SK-N-SH (cell line): ENCODE measurements at regions of chr16 and their contacts with region 1.

Region 1: DNA sequence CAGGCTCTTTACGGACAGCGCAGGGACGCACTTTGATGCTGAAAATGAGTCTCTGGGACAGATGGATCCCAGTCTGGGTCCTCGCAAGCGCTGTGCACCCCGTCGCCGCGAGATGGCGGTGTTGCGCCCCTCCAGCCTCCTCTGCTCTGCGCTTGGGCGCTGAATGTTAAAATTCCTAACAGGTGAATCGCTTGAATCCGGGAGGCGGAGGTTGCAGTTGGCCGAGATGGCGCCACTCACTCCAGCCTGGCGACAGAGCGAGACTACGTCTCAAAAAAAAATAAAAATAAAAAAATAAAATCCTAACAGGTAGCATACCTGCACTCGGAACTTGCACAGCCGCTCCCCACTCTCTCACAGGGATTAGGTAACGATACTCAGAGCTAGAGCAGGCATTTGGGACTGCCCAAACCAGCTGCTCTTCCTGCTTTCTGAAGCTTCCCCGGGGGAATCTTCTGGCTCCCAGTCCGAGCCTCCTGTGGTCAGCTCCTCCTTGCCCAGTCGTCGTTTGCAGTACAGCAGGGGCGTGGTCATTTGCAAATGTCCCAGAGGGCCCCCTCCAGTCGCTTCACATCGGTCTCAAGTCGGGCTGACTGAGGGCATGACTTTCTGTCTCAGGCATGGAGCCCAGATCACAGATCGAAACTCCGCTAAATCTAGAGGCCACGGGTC is 26.2 kb upstream of the OSGIN1 start:
- DNase-seq: peak; percentile 90
- H3K4me3 ChIP-seq: peak overlapping the region in 1 of 2 experiments; percentile 51; a peak in 1 of 4 replicates
- H3K27ac ChIP-seq: no peak overlapping the region
- H3K4me1 ChIP-seq: peaks cover 0 to 11% of the 10 kb centered on the region in 2 experiments; a peak in 1 of 4 replicates
- H3K27me3 ChIP-seq: no peaks in the 10 kb centered on the region
- CTCF ChIP-seq: peak; percentile 95
- EP300 ChIP-seq: no peak
- RAD21 ChIP-seq: peak; percentile 73

Region 2: GRCh38 chr16:83826146-83826913 is 100.5 kb before region 1 on chr16:
- CTCF ChIA-PET with region 1: interaction called, 13 read pairs
- POLR2A ChIA-PET with region 1: no interaction called
- DNase-seq: peak; percentile 86
- H3K4me3 ChIP-seq: peak overlapping the region in 1 of 2 experiments; percentile 2; a peak in 1 of 4 replicates
- H3K27ac ChIP-seq: no peak overlapping the region
- H3K4me1 ChIP-seq: no peaks in the 10 kb centered on the region; a peak in 1 of 4 replicates
- H3K27me3 ChIP-seq: no peaks in the 10 kb centered on the region; the same call in 1 of the 2 replicates
- CTCF ChIP-seq: peak; percentile 92
- EP300 ChIP-seq: no peak
- RAD21 ChIP-seq: peak; percentile 86

Region 3: GRCh38 chr16:83898463-83899271 is 28.2 kb before region 1 on chr16 and contains the start of gene MLYCD:
- CTCF ChIA-PET with region 1: interaction called, 13 read pairs
- POLR2A ChIA-PET with region 1: no interaction called
- DNase-seq: peak; percentile 98
- H3K4me3 ChIP-seq: peak within 1 kb of the TSS; percentile 69 to 81
- H3K27ac ChIP-seq: peak within 1 kb of the TSS; percentile 28 to 61; a peak in 3 of 4 replicates
- H3K4me1 ChIP-seq: peaks cover 0 to 9% of the 10 kb centered on the region in 2 experiments; a peak in 2 of 4 replicates
- H3K27me3 ChIP-seq: no peaks in the 10 kb centered on the region
- CTCF ChIP-seq: no peak
- EP300 ChIP-seq: no peak
- RAD21 ChIP-seq: no peak
- polyA plus RNA-seq, gene MLYCD: 2.4 and 2.7 TPM in 2 replicates

Region 4: DNA sequence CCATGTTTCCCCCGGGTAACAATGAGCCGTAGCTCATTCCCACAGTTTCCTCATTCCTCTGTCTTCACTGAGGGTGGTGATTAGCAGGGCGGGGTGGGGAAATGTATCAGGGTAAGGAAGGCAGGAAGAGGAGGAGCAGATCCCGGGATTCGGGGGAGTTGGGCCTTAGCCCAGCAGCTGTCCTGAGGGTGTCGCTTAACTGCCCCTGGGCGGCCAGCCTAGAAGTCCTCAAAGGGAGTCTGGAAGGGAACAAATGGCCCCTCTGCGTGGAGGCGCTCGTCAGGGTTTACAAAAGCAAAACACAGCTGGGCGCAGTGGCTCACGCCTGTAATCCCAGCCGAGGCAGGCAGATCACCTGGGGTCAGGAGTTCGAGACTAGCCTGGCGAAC is 13.6 kb before region 1 on chr16:
- CTCF ChIA-PET with region 1: interaction called, 16 read pairs
- POLR2A ChIA-PET with region 1: interaction called, 3 read pairs
- DNase-seq: no peak
- H3K4me3 ChIP-seq: no peak overlapping the region
- H3K27ac ChIP-seq: no peak overlapping the region
- H3K4me1 ChIP-seq: no peaks in the 10 kb centered on the region
- H3K27me3 ChIP-seq: no peaks in the 10 kb centered on the region
- CTCF ChIP-seq: no peak
- EP300 ChIP-seq: no peak
- RAD21 ChIP-seq: no peak

Region 5: DNA sequence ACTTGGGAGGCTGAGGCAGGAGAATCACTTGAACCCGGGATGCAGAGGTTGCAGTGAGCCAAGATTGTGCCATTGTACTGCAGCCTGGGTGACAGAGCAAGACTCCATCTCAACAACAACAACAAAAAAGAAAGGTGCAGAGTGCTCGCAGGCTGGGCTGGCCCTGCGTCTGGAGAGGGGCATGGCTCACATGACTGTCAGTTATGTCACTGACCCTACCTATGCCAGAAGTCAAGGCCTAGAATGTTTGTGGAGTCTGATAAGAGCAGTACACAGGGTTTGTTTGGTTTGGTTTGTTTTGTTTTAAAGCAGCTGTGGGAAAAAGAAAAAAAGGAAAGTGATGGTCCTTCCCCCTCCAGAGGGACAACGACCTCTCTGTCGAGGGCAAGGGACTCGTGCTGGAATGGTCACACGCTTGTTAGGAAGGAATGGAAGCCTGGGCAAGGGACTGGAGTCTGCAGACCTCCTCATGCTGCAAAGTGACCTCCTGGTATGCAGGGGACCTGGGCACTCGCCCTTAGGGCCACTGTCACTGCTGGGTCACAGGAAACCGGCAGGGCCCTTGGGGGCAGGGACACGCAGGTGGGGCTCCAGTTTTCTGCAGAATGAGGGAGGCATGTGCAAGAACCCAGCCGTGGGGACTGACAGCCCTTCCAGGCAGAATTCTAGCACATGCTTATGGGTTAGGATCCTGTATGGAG is 16.1 kb after region 1 on chr16:
- CTCF ChIA-PET with region 1: interaction called, 33 read pairs
- POLR2A ChIA-PET with region 1: no interaction called
- DNase-seq: no peak
- H3K4me3 ChIP-seq: no peak overlapping the region
- H3K27ac ChIP-seq: no peak overlapping the region
- H3K4me1 ChIP-seq: no peaks in the 10 kb centered on the region
- H3K27me3 ChIP-seq: no peaks in the 10 kb centered on the region
- CTCF ChIP-seq: no peak
- EP300 ChIP-seq: no peak
- RAD21 ChIP-seq: no peak

Region 6: DNA sequence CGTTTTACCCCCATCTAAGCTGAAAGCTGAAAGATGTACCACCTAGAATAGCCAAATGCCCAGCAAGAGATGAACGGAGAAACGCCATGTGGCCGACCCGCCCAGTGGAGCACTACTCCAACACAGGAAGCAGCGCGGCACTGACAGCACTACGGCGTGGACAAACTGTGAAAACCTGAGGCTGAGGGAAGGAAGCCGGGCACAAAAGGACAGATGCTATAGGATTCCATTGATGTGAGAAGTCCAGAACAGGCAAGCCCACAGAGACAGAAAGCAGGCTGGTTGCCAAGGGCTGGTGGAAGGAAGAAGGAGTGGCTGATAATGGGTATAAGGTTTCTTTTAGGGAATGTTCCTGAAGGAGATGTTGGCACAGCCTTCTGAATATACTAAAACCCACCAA is 145.2 kb after region 1 on chr16:
- CTCF ChIA-PET with region 1: interaction called, 10 read pairs
- POLR2A ChIA-PET with region 1: no interaction called
- DNase-seq: no peak
- H3K4me3 ChIP-seq: no peak overlapping the region
- H3K27ac ChIP-seq: no peak overlapping the region
- H3K4me1 ChIP-seq: peaks cover 0 to 5% of the 10 kb centered on the region in 2 experiments; a peak in 1 of 4 replicates
- H3K27me3 ChIP-seq: no peaks in the 10 kb centered on the region
- CTCF ChIP-seq: no peak
- EP300 ChIP-seq: no peak
- RAD21 ChIP-seq: no peak